ENCODE measurements at regions of chr17 and their contacts with region 1.

Region 1: GRCh38 chr17:3879186-3879585 is 13.7 kb downstream of the CAMKK1 start:
- DNase-seq: no peak
- H3K4me3 ChIP-seq: no peak overlapping the region
- CTCF ChIP-seq: no peak

Region 2: GRCh38 chr17:3865176-3865575 is 14.0 kb before region 1 on chr17:
- CTCF ChIA-PET with region 1: interaction called, 65 read pairs
- POLR2A ChIA-PET with region 1: no interaction called
- DNase-seq: no peak
- H3K4me3 ChIP-seq: no peak overlapping the region
- CTCF ChIP-seq: no peak

Region 3: DNA sequence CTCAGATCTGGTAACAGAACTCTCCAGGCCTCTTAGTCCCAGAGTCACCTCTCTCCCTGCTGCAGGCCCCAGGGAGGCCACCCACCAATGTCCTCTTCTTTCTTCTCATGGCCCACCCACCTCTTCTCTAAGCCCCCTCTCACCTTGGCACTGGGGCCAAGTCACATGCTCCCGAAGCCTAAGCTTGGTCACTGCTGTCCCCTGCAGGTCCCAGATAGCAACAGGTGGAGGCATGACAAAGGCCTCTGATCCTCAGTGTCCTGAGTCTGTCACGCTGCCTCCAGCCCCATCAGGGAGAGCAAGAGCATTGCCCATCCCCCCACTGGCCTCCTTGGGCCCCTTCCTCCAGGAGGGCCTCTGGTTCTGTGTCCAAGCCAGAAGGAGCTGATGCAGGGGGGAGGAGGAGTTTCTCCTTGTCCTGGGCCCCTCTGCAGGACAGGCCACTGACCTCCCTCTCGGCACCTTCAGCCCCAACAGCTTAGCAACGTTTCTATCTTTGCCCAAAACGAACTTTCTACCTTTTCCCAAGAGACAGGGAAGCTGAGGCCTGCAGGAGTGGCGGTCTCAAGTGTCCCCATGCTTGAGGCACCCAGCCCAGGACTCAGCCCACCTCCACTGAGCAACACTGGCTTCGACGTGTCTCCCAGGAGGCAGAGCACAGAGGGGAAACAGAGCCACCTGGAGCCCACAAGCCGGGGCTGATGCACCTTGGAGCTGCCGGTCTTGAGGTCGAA is 28.5 kb after region 1 on chr17:
- CTCF ChIA-PET with region 1: no interaction called
- POLR2A ChIA-PET with region 1: no interaction called
- DNase-seq: no peak
- H3K4me3 ChIP-seq: no peak overlapping the region
- CTCF ChIP-seq: peak; percentile 14